IMR-90 (cell line): ENCODE measurements at regions of chr13 and their contacts with region 1.

Region 1: GRCh38 chr13:71536201-71536600 is 330.8 kb downstream of the DACH1 start:
- DNase-seq: no peak
- ATAC-seq: no peak
- H3K4me3 ChIP-seq: no peak overlapping the region
- H3K27ac ChIP-seq: no peak overlapping the region
- H3K4me1 ChIP-seq: no peaks in the 10 kb centered on the region; the same call in 1 of the 2 replicates
- H3K27me3 ChIP-seq: no peaks in the 10 kb centered on the region
- CTCF ChIP-seq: no peak
- POLR2A ChIP-seq: no peak
- RAD21 ChIP-seq: no peak

Region 2: DNA sequence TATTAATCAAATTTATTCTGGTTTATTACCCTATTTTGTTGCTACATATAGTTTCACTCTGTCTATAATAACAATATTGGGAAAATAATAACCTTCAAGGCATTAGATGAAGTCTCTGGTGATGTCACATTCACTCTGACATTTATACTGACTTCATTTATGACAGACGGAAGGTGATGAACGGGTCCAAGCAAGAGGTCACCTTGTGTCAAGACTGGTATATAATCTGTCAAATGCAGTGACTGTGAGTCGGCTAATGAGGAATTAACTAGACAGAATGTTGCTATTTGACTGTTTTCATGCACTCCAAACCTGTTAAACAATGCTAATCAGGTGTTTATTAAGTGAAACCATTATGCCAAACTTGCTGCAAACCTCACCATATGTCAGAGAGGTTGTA is 627.4 kb before region 1 on chr13:
- CTCF ChIA-PET with region 1: no interaction called
- POLR2A ChIA-PET with region 1: no interaction called
- dilution Hi-C with region 1: no loop called
- in situ Hi-C with region 1: no loop called
- intact Hi-C with region 1: no loop called
- DNase-seq: no peak
- ATAC-seq: no peak
- H3K4me3 ChIP-seq: no peak overlapping the region
- H3K27ac ChIP-seq: no peak overlapping the region
- H3K4me1 ChIP-seq: no peaks in the 10 kb centered on the region
- H3K27me3 ChIP-seq: no peaks in the 10 kb centered on the region
- CTCF ChIP-seq: no peak
- POLR2A ChIP-seq: no peak
- RAD21 ChIP-seq: no peak

Region 3: GRCh38 chr13:71209217-71209616 is 327.0 kb before region 1 on chr13:
- CTCF ChIA-PET with region 1: no interaction called
- POLR2A ChIA-PET with region 1: no interaction called
- dilution Hi-C with region 1: no loop called
- in situ Hi-C with region 1: no loop called
- intact Hi-C with region 1: loop called (anchors 5 kb)
- DNase-seq: no peak
- ATAC-seq: no peak
- H3K4me3 ChIP-seq: no peak overlapping the region
- H3K27ac ChIP-seq: no peak overlapping the region
- H3K4me1 ChIP-seq: no peaks in the 10 kb centered on the region
- H3K27me3 ChIP-seq: no peaks in the 10 kb centered on the region
- CTCF ChIP-seq: no peak
- POLR2A ChIP-seq: no peak
- RAD21 ChIP-seq: no peak